GM18951 (cell line): ENCODE measurements at regions of chr16 and their contacts with region 1.

Region 1: GRCh38 chr16:84277237-84277823 is 17.3 kb upstream of the WFDC1 start:
- POLR2A ChIP-seq: no peak

Region 2: GRCh38 chr16:83913245-83913633 is 364.1 kb before region 1 on chr16:
- in situ Hi-C with region 1: no loop called
- POLR2A ChIP-seq: no peak

Region 3: DNA sequence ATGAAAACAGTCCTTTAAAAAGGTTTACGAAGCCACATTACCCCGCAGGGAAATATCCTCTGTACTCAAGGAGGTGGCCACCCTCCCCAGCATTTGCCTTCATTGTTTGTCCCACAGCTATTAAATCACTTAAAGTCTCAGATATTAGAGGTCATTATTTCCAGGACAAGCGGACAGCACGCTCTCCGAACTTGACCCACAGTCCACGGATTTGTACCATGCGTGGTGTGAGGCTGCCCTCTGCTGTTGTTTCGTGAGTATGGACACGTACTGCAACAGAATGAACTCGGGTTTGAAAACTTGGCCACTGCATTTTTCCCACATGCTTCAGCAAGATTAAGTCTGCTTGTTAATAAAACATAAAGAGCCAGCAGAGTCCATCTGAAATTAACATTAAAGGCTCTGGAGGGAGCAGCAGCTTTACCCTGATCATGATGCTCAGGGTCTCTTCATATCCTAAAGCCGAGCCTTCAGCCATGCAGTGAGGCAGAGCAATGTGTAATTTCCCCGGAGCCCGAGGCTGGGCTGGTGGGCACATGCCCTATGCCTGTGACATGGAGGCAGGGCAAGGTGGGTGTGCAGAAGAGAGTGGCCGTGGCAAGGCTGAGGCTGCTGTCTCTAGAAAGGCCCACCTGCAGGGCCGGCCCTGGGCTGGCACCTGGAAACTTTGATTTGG is 207.4 kb after region 1 on chr16:
- in situ Hi-C with region 1: loop called (anchors 25 kb)
- POLR2A ChIP-seq: no peak

Region 4: GRCh38 chr16:84633622-84634021 is 356.3 kb after region 1 on chr16:
- in situ Hi-C with region 1: loop called (anchors 10 kb)
- POLR2A ChIP-seq: no peak